ENCODE measurements at regions of chr2 and their contacts with region 1.

Region 1: DNA sequence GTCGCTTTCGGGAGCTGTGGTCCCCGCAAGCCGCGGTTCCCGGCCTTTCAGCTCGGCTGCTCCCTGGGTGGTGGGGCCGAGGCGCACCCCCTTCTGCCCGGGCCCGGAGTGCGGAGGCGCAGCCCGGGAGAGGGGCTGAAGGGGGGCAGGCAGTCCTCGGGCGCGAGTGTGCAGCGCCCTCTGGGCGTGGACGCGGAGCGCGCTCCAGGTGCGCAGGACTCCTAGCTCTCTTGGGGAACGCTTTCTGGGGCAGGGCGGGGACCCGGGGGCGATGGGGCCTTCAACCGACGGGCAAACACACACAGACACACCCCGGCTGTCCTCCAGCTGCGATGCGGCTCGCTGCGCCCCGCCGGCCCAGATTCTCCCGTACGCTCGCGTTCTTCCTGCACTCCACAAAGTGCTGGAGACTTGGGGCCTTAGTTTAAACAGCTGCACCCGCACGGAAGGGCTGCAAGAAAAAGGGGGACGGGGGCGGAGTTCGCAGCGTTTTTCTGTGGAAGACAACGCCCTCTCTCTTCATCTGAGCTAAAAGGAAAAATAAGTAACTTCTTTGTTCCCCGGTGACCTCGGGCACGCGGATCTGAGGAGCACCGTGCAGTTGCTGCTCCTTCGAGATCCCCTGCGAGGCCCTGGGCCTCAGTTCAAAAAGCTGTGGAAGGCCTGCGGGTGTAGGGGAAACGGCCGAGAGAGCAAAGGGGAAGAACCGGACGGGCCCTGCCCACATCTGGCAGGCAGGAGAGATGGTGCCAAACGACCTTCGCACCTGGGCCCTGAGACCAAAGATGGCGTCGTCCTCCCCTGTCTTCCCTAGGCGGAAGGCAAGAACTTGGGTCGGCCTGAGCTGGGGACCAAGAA is 593 bp upstream of the SDC1 start:
- DNase-seq: peak; percentile 84 to 88
- ATAC-seq: peak; percentile 65 to 87
- H3K4me3 ChIP-seq: peak overlapping the region; percentile 95
- H3K27ac ChIP-seq: peak overlapping the region; percentile 96 to 97
- H3K4me1 ChIP-seq: peaks cover 33% of the 10 kb centered on the region
- CTCF ChIP-seq: peak; percentile 93
- EP300 ChIP-seq: no peak
- POLR2A ChIP-seq: no peak
- RAD21 ChIP-seq: peak; percentile 79 to 96

Region 2: GRCh38 chr2:20015472-20016083 is 209.9 kb before region 1 on chr2:
- CTCF ChIA-PET with region 1: interaction called, 13 read pairs
- POLR2A ChIA-PET with region 1: no interaction called
- DNase-seq: peak; percentile 40 to 70
- ATAC-seq: peak in 1 of 2 experiments; percentile 42; a peak in 3 of 6 replicates
- H3K4me3 ChIP-seq: no peak overlapping the region
- H3K27ac ChIP-seq: no peak overlapping the region
- H3K4me1 ChIP-seq: peaks cover 10% of the 10 kb centered on the region; the same call in 1 of the 3 replicates
- CTCF ChIP-seq: peak; percentile 84
- EP300 ChIP-seq: no peak
- POLR2A ChIP-seq: no peak
- RAD21 ChIP-seq: peak; percentile 75 to 76

Region 3: DNA sequence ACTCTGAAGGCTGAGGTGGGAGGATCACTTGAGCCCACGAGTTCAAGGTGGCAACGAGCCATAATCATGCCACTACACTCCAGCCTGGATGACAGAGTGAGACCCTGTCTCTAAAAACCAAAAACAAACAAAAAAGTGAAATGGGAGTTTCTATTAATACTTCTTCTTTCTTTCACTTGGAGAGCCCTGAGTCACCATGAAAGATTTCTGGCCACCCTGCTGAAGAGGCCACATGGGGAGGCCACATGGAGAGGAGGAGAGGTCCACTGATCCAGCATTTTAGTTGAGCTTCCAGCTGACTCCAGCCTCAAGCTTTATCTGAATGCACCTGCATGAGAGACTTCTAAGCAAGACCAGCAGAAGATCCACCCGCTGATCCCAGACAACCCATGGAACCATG is 99.9 kb before region 1 on chr2:
- CTCF ChIA-PET with region 1: interaction called, 44 read pairs
- POLR2A ChIA-PET with region 1: no interaction called
- DNase-seq: no peak
- ATAC-seq: no peak
- H3K4me3 ChIP-seq: no peak overlapping the region
- H3K27ac ChIP-seq: no peak overlapping the region
- H3K4me1 ChIP-seq: no peaks in the 10 kb centered on the region
- CTCF ChIP-seq: no peak
- EP300 ChIP-seq: no peak
- POLR2A ChIP-seq: no peak
- RAD21 ChIP-seq: no peak

Region 4: GRCh38 chr2:20164061-20164733 is 61.3 kb before region 1 on chr2:
- CTCF ChIA-PET with region 1: interaction called, 13 read pairs
- POLR2A ChIA-PET with region 1: interaction called, 5 read pairs
- DNase-seq: peak; percentile 58 to 64
- ATAC-seq: peak; percentile 57 to 66
- H3K4me3 ChIP-seq: no peak overlapping the region
- H3K27ac ChIP-seq: peak overlapping the region; percentile 0 to 81; a peak in 4 of 6 replicates
- H3K4me1 ChIP-seq: peaks cover 29% of the 10 kb centered on the region
- CTCF ChIP-seq: no peak
- EP300 ChIP-seq: no peak
- POLR2A ChIP-seq: no peak
- RAD21 ChIP-seq: no peak

Region 5: GRCh38 chr2:20212459-20212870 is 13.1 kb before region 1 on chr2:
- CTCF ChIA-PET with region 1: interaction called, 149 read pairs
- POLR2A ChIA-PET with region 1: interaction called, 6 read pairs
- DNase-seq: no peak
- ATAC-seq: no peak
- H3K4me3 ChIP-seq: no peak overlapping the region
- H3K27ac ChIP-seq: 0 out of 6 replicates have a peak overlapping the region, but pooled peaks of 1 of the 2 experiments have one; percentile 14
- H3K4me1 ChIP-seq: peaks cover 53% of the 10 kb centered on the region
- CTCF ChIP-seq: no peak
- EP300 ChIP-seq: no peak
- POLR2A ChIP-seq: no peak
- RAD21 ChIP-seq: no peak

Region 6: DNA sequence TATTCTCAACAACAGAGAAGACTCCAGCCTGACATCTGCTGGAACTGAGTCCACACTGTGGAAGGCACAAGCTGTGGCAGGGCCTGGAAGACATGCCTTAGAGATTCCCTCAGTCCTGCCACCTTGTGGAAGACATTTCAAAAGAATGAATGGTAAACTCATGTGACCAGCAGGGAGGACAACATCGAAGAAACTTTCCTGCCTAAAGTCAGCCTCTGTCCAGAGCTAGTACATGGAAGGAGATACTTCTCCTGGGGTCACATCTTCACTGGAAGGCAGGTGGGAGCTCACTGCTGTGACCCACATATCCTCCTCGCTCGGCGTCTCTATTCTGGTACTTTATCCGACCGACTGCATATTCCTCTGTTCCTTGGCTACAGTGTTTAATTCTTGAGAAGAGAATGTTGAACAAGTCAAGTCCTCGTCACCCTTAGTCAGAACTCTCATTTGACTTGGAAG is 65.6 kb after region 1 on chr2:
- CTCF ChIA-PET with region 1: interaction called, 15 read pairs
- POLR2A ChIA-PET with region 1: interaction called, 3 read pairs
- DNase-seq: peak; percentile 91 to 93
- ATAC-seq: peak; percentile 100
- H3K4me3 ChIP-seq: no peak overlapping the region
- H3K27ac ChIP-seq: peak overlapping the region in 1 of 2 experiments; percentile 33; a peak in 1 of 6 replicates
- H3K4me1 ChIP-seq: peaks cover 23% of the 10 kb centered on the region
- CTCF ChIP-seq: peak; percentile 94
- EP300 ChIP-seq: no peak
- POLR2A ChIP-seq: no peak
- RAD21 ChIP-seq: peak; percentile 63 to 64

Region 7: GRCh38 chr2:20314562-20315501 is 89.3 kb after region 1 on chr2:
- CTCF ChIA-PET with region 1: no interaction called
- POLR2A ChIA-PET with region 1: no interaction called
- DNase-seq: no peak
- ATAC-seq: no peak
- H3K4me3 ChIP-seq: no peak overlapping the region
- H3K27ac ChIP-seq: no peak overlapping the region
- H3K4me1 ChIP-seq: peaks cover 7% of the 10 kb centered on the region; the same call in 1 of the 3 replicates
- CTCF ChIP-seq: no peak
- EP300 ChIP-seq: no peak
- POLR2A ChIP-seq: no peak
- RAD21 ChIP-seq: no peak